ENCODE measurements at regions of chr6 and their contacts with region 1.

Region 1: GRCh38 chr6:132483779-132484679 is 28.9 kb downstream of the STX7 start:
- DNase-seq: peak; percentile 29
- CTCF ChIP-seq: peak; percentile 51

Region 2: GRCh38 chr6:130858498-130859160 is 1625.4 kb before region 1 on chr6:
- in situ Hi-C with region 1: no loop called
- DNase-seq: no peak
- CTCF ChIP-seq: no peak

Region 3: DNA sequence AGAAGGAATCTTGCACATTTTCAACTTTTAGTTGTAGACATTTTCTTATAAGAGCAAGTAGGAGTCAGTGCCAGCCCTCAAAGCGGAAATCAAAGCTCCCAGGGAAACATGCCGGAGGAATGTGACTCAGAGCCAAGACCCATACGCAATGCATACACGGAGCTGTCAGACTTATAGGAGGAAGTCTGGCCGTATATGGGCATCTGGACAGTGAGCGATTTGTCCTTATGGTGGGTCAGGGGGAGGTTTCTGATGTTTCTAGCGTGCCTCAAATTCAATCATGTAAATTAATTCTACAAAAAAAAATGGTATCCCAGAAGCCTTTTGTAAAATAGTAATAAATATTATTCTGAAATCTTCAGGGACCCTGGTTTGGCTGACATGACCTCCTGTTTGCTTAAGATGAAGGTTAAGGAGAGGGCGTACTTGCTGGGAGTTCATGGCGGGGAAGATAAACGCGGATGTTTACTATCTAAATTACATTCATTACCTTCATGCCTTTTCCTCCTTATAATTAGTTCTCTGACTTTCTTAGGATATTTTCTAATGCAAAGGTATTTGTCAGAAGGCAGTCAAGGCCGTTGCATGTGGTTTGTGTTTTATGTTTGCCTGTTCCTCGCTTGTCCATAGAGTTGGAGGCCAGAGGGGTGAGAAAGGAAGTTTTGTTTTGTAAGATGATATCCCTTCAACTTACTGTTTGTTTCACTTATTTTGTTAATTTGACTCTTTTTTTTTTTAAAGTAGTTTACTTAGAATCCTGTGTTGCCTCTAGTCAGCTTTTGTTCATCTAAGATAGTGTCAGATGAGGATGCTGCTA is 529.0 kb before region 1 on chr6:
- in situ Hi-C with region 1: no loop called
- DNase-seq: no peak
- CTCF ChIP-seq: no peak

Region 4: DNA sequence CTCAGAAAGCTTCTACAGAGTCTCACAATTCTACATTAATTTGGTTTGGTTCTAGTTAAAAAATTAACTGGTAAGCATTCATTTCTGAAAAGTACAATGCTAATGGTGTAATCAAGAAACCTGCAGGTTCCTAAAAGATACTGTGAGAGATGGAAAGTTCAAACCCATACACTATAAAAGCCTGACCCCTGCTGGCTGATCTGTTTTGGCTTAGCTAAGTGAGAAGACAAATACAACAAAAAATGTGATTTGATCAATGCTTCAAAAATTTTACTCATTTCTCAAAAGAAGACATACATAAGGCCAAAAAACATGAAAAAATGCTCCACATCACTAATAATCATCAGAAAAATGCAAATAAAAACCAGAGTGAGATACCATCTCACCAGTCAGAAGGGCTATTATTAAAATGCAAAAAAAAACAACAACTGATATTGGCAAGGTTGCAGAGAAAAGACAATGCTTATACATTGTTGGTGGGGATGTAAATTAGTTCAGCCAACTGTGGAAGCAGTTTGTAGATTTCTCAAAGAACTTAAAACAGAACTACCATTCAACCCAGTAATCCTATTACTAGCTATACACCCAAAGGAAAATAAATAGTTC is 185.6 kb before region 1 on chr6:
- in situ Hi-C with region 1: loop called (anchors 5 kb)
- DNase-seq: peak; percentile 15
- CTCF ChIP-seq: peak; percentile 61

Region 5: DNA sequence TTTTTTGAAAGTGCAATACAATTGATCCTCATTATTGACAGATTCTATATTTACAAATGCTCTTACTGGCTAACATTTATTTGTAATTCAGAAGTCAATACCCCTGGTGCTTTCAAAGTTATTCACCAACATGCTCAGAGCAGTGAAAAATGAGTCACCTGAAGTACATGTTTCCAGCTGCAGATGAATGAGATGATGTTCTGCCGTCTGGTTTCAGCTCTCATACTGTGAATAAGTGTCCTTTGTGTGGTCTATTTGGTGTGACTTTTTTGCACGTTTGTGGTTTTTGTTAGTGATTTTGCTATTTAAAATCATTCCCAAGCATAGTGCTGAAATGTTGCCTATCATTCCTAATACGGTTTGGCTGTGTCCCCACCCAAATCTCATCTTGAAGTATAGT is 734.8 kb after region 1 on chr6:
- in situ Hi-C with region 1: no loop called
- DNase-seq: no peak
- CTCF ChIP-seq: no peak

Measured in GM13977 (cell line).